A673 (cell line): ENCODE measurements at regions of chr3 and their contacts with region 1.

Region 1: DNA sequence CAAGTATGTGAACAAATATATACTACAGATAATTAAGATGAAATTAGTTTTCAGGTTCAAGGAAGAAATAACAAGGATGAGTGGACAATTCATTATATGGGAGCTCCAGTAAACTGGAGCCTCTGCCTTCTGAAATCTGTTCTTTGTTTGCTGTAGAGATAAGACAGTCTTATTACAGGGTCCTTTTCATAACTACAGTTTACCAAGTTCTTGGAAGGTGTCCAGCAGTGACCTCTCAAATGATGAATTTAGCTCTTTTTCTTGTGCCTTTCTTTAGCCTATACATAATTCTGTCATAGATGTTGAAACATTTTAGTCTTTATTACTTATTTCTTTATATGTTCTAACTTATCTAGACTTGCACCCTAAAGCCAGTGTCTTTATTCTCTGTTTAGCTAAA is 89.7 kb upstream of the GBE1 start:
- DNase-seq: no peak
- H3K4me3 ChIP-seq: no peak overlapping the region
- H3K27ac ChIP-seq: no peak overlapping the region
- H3K4me1 ChIP-seq: no peaks in the 10 kb centered on the region
- H3K27me3 ChIP-seq: peaks cover 2% of the 10 kb centered on the region
- CTCF ChIP-seq: no peak

Region 2: GRCh38 chr3:81632659-81633058 is 218.5 kb before region 1 on chr3:
- CTCF ChIA-PET with region 1: no interaction called
- POLR2A ChIA-PET with region 1: no interaction called
- intact Hi-C with region 1: no loop called
- DNase-seq: no peak
- H3K4me3 ChIP-seq: no peak overlapping the region
- H3K27ac ChIP-seq: no peak overlapping the region
- H3K4me1 ChIP-seq: no peaks in the 10 kb centered on the region
- H3K27me3 ChIP-seq: no peaks in the 10 kb centered on the region
- CTCF ChIP-seq: no peak

Region 3: DNA sequence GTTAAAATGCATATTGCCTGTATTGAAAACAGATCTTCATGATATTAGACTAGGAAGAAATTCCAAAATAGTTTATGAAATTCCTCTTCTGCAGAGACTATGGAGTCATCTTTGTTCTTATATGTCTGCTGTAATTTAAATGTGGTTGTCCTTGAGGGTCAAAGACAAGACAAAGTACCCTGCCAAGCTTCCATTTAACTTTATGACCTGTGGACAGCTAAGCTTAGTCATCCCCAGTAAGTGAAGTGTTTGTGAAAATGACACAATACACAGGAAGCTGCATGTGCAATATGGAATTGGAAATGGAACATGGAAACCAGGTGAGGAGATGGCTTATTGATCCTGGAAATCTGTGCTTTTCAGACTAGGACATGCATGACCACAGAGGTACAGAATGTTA is 21.2 kb before region 1 on chr3:
- CTCF ChIA-PET with region 1: no interaction called
- POLR2A ChIA-PET with region 1: no interaction called
- intact Hi-C with region 1: loop called (anchors 1 kb)
- DNase-seq: no peak
- H3K4me3 ChIP-seq: no peak overlapping the region
- H3K27ac ChIP-seq: no peak overlapping the region
- H3K4me1 ChIP-seq: no peaks in the 10 kb centered on the region
- H3K27me3 ChIP-seq: no peaks in the 10 kb centered on the region
- CTCF ChIP-seq: no peak

Region 4: GRCh38 chr3:81985996-81986723 is 135.0 kb after region 1 on chr3:
- CTCF ChIA-PET with region 1: no interaction called
- POLR2A ChIA-PET with region 1: no interaction called
- intact Hi-C with region 1: no loop called
- DNase-seq: peak; percentile 2
- H3K4me3 ChIP-seq: no peak overlapping the region
- H3K27ac ChIP-seq: no peak overlapping the region
- H3K4me1 ChIP-seq: no peaks in the 10 kb centered on the region
- H3K27me3 ChIP-seq: no peaks in the 10 kb centered on the region
- CTCF ChIP-seq: no peak

Region 5: DNA sequence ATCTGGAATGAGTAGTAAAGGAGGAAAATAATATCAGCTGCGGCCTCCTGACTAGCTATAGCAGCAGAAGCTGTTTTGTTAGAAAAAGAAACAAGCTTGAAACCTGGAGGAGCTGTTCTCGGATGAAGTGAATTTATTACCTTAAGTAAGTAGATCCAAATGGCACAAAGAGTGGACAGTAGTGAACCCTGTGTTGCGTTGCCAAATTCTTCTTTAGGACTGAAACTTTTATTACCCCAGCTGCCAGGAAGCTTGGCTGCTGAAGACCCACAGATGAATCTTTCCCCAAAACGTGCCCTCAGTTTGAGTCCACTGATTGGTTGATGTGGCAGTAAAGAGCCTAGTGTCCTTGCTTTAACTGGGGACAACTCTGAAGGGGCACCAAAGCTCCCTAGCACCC is 277.1 kb after region 1 on chr3:
- CTCF ChIA-PET with region 1: no interaction called
- POLR2A ChIA-PET with region 1: no interaction called
- intact Hi-C with region 1: no loop called
- DNase-seq: no peak
- H3K4me3 ChIP-seq: no peak overlapping the region
- H3K27ac ChIP-seq: no peak overlapping the region
- H3K4me1 ChIP-seq: no peaks in the 10 kb centered on the region
- H3K27me3 ChIP-seq: no peaks in the 10 kb centered on the region
- CTCF ChIP-seq: no peak